Heart right ventricle (tissue), 16 donors: ENCODE measurements at regions of chrX and their contacts with region 1.

Region 1: GRCh38 chrX:19904778-19905367 is 17.5 kb upstream of the SH3KBP1 start:
- DNase-seq: peak in 1 of 2 donors; percentile 4
- ATAC-seq: peak in 6 of 8 donors; percentile 15 to 72 (median 55)
- H3K4me3 ChIP-seq: no peak overlapping the region
- H3K27ac ChIP-seq: no peak overlapping the region
- H3K4me1 ChIP-seq: no peaks in the 10 kb centered on the region
- H3K27me3 ChIP-seq: no peaks in the 10 kb centered on the region
- CTCF ChIP-seq: peak; percentile 46 to 69 (median 63)

Region 2: GRCh38 chrX:19972984-19973383 is 68.1 kb after region 1 on chrX:
- intact Hi-C with region 1: loop called in 1 of 10 experiments (anchors 10 kb)
- DNase-seq: no peak
- ATAC-seq: no peak
- H3K4me3 ChIP-seq: no peak overlapping the region
- H3K27ac ChIP-seq: no peak overlapping the region
- H3K4me1 ChIP-seq: no peaks in the 10 kb centered on the region
- H3K27me3 ChIP-seq: peaks cover 0 to 6% (median 0%) of the 10 kb centered on the region in 7 donors
- CTCF ChIP-seq: no peak

Region 3: GRCh38 chrX:19990556-19991349 is 85.9 kb after region 1 on chrX and contains the start of gene BCLAF3:
- intact Hi-C with region 1: loop called in 7 of 10 experiments (anchors 2 to 10 kb)
- DNase-seq: peak; percentile 86 to 91
- ATAC-seq: peak; percentile 97 to 100 (median 100)
- H3K4me3 ChIP-seq: peak within 1 kb of the TSS; percentile 50 to 89 (median 77)
- H3K27ac ChIP-seq: peak within 1 kb of the TSS in 9 of 10 donors; percentile 60 to 78 (median 73)
- H3K4me1 ChIP-seq: peaks cover 0 to 13% (median 0%) of the 10 kb centered on the region in 9 donors
- H3K27me3 ChIP-seq: peaks cover 0 to under 1% (median 0%) of the 10 kb centered on the region in 7 donors
- CTCF ChIP-seq: peak; percentile 57 to 89 (median 80)
- total RNA-seq, gene BCLAF3: 5.5 to 10.2 (median 8.7) TPM

Region 4: GRCh38 chrX:20066968-20067708 is 162.3 kb after region 1 on chrX:
- intact Hi-C with region 1: loop called in 1 of 10 experiments (anchors 10 kb)
- DNase-seq: no peak
- ATAC-seq: peak in 3 of 8 donors; percentile 42 to 46 (median 43)
- H3K4me3 ChIP-seq: no peak overlapping the region
- H3K27ac ChIP-seq: no peak overlapping the region
- H3K4me1 ChIP-seq: peaks cover 0 to 11% (median 0%) of the 10 kb centered on the region in 9 donors
- H3K27me3 ChIP-seq: peaks cover 0 to 46% (median 0%) of the 10 kb centered on the region in 7 donors
- CTCF ChIP-seq: peak in 6 of 9 donors; percentile 20 to 43 (median 32)

Region 5: DNA sequence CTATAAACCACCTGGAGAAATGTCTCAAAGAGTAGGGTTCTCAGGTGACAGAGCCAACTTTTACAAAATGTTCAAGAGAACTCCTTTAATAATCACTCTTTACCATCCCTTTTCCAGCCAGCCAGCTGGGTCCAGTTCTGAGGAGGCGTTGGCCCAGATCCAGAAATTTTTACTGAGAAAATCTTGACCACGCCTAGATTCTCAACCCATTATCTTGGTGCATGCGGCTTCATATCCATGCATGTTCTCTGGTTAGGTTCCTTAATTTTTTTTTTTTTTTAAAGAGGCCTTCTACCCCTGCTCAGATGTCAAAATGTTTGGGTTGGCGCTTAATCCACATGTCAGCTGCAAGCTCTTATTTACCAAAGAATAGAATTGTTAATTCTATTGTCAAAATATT is 223.8 kb after region 1 on chrX:
- intact Hi-C with region 1: loop called in 8 of 10 experiments (anchors 5 to 10 kb)
- DNase-seq: peak in 1 of 2 donors; percentile 10
- ATAC-seq: no peak
- H3K4me3 ChIP-seq: no peak overlapping the region
- H3K27ac ChIP-seq: no peak overlapping the region
- H3K4me1 ChIP-seq: peaks cover 0 to 13% (median 0%) of the 10 kb centered on the region in 9 donors
- H3K27me3 ChIP-seq: no peaks in the 10 kb centered on the region
- CTCF ChIP-seq: no peak

Region 6: DNA sequence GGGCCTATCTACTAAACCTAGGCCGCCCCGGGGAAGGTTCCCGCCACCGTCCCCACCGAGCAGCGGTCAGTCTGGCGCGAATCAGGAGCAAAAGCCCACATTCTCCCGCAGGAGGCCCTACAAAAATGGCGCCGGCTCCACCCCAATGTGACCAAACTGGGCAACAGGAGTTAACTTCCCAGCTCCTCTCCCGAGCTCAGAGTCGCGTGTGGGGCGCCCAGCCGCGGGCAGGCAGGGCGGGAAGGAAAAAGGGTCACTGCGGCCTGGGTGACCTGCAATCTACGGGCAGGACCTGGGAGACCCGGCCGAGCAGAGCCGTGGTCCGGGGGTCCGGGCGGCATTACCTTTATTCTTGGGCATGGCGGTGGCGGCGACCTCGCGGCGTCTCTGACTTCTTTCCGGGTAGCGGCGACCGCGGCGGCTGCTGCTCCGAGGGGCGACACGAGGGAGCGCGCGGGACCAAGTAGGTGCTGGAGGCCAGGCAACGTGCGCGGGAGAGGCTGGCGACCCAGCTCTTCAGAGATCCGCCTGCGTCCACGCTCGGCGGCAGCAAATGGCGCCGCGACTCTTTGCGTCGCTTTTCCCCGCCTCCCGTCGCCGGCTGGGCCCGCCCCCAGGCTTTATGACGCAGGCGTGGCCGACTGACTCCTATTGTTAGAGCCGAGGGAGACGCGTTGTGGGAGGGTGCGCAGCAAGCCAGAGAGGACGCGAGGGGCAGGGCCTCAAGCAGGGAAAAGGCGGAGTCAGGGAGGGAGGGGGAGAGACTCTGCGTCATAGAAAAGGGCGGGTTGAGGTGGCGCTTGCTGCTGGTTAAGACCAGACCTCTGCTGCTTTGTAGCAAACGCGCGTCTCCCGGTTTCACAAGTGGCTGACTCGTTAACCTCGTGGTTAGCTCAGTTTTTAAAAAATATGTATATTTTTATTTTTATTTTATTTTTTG is 236.7 kb after region 1 on chrX and contains the start of gene EIF1AX:
- intact Hi-C with region 1: loop called in 2 of 10 experiments (anchors 10 kb)
- DNase-seq: peak; percentile 94 to 96
- ATAC-seq: peak; percentile 99 to 100 (median 100)
- H3K4me3 ChIP-seq: peak within 1 kb of the TSS; percentile 75 to 90 (median 80)
- H3K27ac ChIP-seq: peak within 1 kb of the TSS in 9 of 10 donors; percentile 78 to 90 (median 89)
- H3K4me1 ChIP-seq: peaks cover 0 to 34% (median 17%) of the 10 kb centered on the region in 9 donors
- H3K27me3 ChIP-seq: peaks cover 0 to 6% (median 0%) of the 10 kb centered on the region in 7 donors
- CTCF ChIP-seq: no peak
- total RNA-seq, gene EIF1AX: 46.0 to 107 (median 59.0) TPM

Region 7: DNA sequence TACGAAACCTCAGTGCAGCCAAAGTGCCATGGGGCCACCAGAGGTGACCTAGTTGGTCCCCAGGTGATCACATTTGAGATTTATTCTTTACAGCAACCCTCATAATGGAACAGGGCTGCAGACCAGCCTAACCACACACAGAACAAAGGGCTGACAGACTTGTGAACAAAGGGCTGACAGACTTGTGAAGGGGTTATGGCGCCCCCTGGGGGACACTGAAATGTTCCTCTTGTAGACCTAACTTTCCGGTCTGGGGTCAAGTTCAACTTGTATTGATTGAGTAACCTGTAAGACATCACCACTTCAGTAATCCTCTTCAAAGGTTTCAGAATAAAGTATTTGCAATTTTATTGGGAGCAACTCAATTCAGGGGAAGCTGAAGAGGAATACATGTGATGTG is 537.7 kb after region 1 on chrX:
- intact Hi-C with region 1: loop called in 2 of 10 experiments (anchors 10 kb)
- DNase-seq: peak; percentile 63 to 75
- ATAC-seq: peak; percentile 56 to 83 (median 75)
- H3K4me3 ChIP-seq: no peak overlapping the region
- H3K27ac ChIP-seq: no peak overlapping the region
- H3K4me1 ChIP-seq: peaks cover 0 to 6% (median 0%) of the 10 kb centered on the region in 9 donors
- H3K27me3 ChIP-seq: peaks cover 0 to 8% (median 0%) of the 10 kb centered on the region in 7 donors
- CTCF ChIP-seq: peak; percentile 14 to 70 (median 66)